HEK293 (cell line): ENCODE measurements at regions of chr19 and their contacts with region 1.

Region 1: GRCh38 chr19:7903244-7904073 is at the start of gene MAP2K7:
- H3K4me3 ChIP-seq: peak within 1 kb of the TSS; percentile 90
- H3K27ac ChIP-seq: peak within 1 kb of the TSS; percentile 80
- H3K4me1 ChIP-seq: peaks cover 5% of the 10 kb centered on the region; the same call in 1 of the 2 replicates
- CTCF ChIP-seq: peak; percentile 100

Region 2: DNA sequence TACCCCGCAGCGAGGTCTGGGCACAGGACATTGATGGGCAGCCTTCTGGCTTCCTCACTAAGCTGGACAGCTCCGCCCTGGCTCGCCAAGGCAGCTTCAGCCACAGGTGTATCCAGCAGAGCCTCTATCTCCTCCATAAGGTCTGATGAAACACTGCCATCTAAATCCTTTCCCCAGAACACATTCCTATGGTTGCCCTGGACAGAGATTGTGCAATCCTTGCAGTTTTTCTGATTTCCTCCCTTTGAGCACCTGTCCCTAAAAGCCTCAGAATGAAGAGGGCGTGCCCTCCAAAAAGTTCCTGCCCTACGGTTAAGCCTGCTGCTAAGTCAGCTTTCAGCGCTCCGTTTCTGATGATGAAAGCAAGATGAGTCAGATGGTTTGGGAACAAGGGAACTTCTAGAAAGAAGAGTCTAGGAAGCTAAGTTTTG is 119.5 kb before region 1 on chr19:
- CTCF ChIA-PET with region 1: no interaction called
- POLR2A ChIA-PET with region 1: no interaction called
- H3K4me3 ChIP-seq: no peak overlapping the region
- H3K27ac ChIP-seq: no peak overlapping the region
- H3K4me1 ChIP-seq: no peaks in the 10 kb centered on the region
- CTCF ChIP-seq: no peak

Region 3: GRCh38 chr19:7888145-7888825 is 15.2 kb before region 1 on chr19 and contains the start of gene LRRC8E:
- CTCF ChIA-PET with region 1: interaction called, 4 read pairs
- POLR2A ChIA-PET with region 1: interaction called, 22 read pairs
- H3K4me3 ChIP-seq: peak within 1 kb of the TSS; percentile 76
- H3K27ac ChIP-seq: peak within 1 kb of the TSS; percentile 54; the same call in 1 of the 2 replicates
- H3K4me1 ChIP-seq: peaks cover 9% of the 10 kb centered on the region; the same call in 1 of the 2 replicates
- CTCF ChIP-seq: no peak

Region 4: DNA sequence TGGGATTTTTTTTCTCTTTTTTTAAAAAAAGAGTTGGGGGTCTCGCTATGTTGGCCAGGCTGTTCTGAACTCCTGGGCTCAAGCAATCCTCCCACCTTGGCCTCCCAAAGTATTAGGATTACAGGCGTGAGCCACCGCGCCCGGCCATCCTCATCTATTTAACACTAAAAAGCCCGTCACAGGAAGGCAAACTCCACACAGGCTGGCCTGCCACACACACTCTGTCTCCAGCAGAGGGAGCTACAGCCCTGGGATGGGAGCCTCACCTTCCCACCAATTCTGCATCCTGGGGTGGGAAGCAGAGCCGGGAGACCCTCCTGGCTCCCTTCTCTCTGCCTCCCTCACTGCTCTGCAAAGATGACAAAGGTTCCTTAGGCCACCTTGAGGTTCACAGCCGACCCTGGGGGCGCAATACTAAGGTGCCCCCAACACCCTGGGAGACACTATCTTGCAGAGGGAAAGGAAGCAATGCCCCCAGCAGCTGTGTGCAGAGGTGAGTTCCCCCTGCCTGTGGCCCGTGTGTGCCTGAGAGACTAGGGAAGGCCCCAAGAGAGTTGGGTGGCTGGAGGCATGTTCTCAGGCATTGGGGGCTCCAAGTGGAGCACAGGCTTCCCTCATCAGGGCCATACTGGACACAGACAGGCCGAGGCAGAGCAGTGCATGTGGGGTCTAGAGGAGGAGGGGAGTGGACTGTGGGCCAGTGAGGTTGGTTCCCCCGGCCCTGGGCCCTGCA is 67.4 kb after region 1 on chr19:
- CTCF ChIA-PET with region 1: no interaction called
- POLR2A ChIA-PET with region 1: no interaction called
- H3K4me3 ChIP-seq: no peak overlapping the region
- H3K27ac ChIP-seq: no peak overlapping the region
- H3K4me1 ChIP-seq: no peaks in the 10 kb centered on the region
- CTCF ChIP-seq: peak; percentile 68